ENCODE measurements at regions of chr20 and their contacts with region 1.

Region 1: DNA sequence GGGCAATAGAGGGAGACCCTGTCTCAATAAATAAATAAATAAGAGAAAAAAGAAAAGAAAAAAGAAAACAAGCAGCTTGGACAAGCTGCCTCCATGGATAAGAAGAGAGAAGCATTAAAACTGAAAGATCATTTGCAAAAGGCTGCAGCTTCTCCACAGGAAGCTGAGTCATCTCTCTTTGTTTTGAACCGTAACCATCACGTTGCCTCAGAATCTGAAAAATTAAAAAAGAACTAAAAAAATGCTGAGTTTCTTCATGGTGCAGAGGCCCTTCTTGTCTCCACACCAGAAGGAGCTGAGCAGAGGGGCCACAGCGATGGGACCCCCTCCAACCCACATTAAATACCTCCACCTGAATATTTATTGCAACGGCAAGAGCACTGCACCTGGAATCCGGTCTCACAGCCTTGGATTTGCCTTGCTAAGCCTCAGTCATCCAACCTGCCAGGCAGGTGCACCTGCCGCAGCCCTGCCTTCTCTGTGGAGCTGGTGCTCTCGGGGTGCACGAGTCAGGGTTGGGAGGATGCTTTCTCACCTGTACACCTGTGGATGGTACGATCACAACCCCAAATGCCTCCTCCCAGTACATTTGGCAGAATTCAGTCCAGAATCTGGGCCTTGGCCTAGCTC is 28.1 kb downstream of the TOX2 start:
- DNase-seq: peak in 7 of 9 donors; percentile 28 to 56 (median 47)
- ATAC-seq: peak; percentile 72
- H3K4me3 ChIP-seq: no peak overlapping the region
- H3K4me3 Mint-ChIP-seq: peak overlapping the region; percentile 16 to 79 (median 46)
- H3K27ac ChIP-seq: peak overlapping the region; percentile 9
- H3K27ac Mint-ChIP-seq: peak overlapping the region; percentile 42 to 90 (median 72)
- H3K4me1 ChIP-seq: peaks cover 29% of the 10 kb centered on the region in 2 donors
- H3K4me1 Mint-ChIP-seq: peaks cover 61 to 92% (median 68%) of the 10 kb centered on the region in 7 donors
- H3K27me3 ChIP-seq: no peaks in the 10 kb centered on the region
- H3K27me3 Mint-ChIP-seq: peaks cover 0 to 27% (median 0%) of the 10 kb centered on the region in 5 donors

Region 2: DNA sequence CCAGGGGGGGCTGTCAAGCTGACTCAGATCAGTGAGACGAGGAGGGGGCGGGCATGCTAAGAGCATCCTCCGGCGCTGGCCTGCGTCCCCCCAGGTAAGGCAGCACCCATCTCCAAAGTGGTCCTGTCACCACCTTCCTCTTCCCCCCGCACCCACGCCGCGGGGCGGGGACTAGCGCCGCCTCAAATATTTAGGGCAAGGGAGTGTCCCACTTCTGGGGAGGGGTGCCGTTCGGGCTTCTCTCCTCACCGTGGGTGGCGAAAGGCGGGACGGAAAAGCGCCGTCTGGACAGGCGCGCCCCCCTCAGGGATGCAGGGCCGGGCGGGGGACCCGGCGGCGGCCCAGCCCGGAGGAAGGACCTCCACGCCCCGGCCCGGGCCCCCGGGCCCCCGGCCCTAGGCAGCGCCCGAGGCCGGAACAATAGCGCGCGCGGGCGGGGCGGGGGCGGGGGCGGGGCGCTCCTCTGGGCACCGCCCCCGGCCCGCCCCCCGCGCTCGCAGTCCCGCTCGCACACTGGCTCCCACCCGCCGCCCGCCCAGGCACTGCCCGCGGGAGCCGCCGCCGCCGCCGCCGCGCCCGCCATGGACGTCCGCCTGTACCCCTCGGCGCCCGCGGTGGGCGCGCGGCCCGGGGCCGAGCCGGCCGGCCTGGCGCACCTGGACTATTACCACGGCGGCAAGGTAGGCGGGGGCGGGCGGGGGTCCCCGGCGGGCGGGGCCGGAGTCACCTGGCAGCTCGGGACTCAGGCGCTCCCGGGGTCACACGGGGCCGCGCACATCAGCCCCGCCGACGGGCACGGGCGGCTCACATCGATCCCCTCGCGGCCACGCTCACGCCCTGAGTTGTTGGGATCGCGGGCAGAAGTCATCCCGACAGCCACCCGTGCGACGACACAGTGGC is 28.2 kb before region 1 on chr20 and contains the start of gene TOX2:
- CTCF ChIA-PET with region 1: no interaction called
- POLR2A ChIA-PET with region 1: interaction called, 3 read pairs
- intact Hi-C with region 1: loop called in 1 of 2 experiments (anchors 2 kb)
- DNase-seq: peak; percentile 12 to 59 (median 42)
- ATAC-seq: peak; percentile 86
- H3K4me3 ChIP-seq: peak within 1 kb of the TSS; percentile 57
- H3K4me3 Mint-ChIP-seq: peak within 1 kb of the TSS; percentile 78 to 97 (median 88)
- H3K27ac ChIP-seq: no peak within 1 kb of the TSS
- H3K27ac Mint-ChIP-seq: peak within 1 kb of the TSS in 8 of 9 donors; percentile 70 to 94 (median 78)
- H3K4me1 ChIP-seq: peaks cover 14 to 16% of the 10 kb centered on the region in 2 donors
- H3K4me1 Mint-ChIP-seq: peaks cover 12 to 28% (median 21%) of the 10 kb centered on the region in 7 donors
- H3K27me3 ChIP-seq: peaks cover 0 to 6% of the 10 kb centered on the region in 2 donors
- H3K27me3 Mint-ChIP-seq: peaks cover 26 to 62% (median 34%) of the 10 kb centered on the region in 5 donors
- total RNA-seq, gene TOX2: 0.22 to 7.1 (median 0.96) TPM

Region 3: GRCh38 chr20:43955062-43955749 is 12.4 kb after region 1 on chr20:
- CTCF ChIA-PET with region 1: interaction called, 4 read pairs
- POLR2A ChIA-PET with region 1: interaction called, 14 read pairs
- intact Hi-C with region 1: loop called (anchors 1 kb)
- DNase-seq: peak in 3 of 9 donors; percentile 13 to 49 (median 13)
- ATAC-seq: peak; percentile 72
- H3K4me3 ChIP-seq: no peak overlapping the region
- H3K4me3 Mint-ChIP-seq: peak overlapping the region in 7 of 10 donors; percentile 8 to 65 (median 22)
- H3K27ac ChIP-seq: no peak overlapping the region
- H3K27ac Mint-ChIP-seq: peak overlapping the region in 2 of 9 donors; percentile 28 to 58
- H3K4me1 ChIP-seq: peaks cover 72 to 76% of the 10 kb centered on the region in 2 donors
- H3K4me1 Mint-ChIP-seq: peaks cover 72 to 96% (median 85%) of the 10 kb centered on the region in 7 donors
- H3K27me3 ChIP-seq: peaks cover 0 to 5% of the 10 kb centered on the region in 2 donors
- H3K27me3 Mint-ChIP-seq: peaks cover 0 to 45% (median 0%) of the 10 kb centered on the region in 5 donors

Region 4: GRCh38 chr20:43963872-43964791 is 21.4 kb after region 1 on chr20:
- CTCF ChIA-PET with region 1: interaction called, 4 read pairs
- POLR2A ChIA-PET with region 1: interaction called, 14 read pairs
- intact Hi-C with region 1: loop called in 1 of 2 experiments (anchors 1 kb)
- DNase-seq: peak in 7 of 9 donors; percentile 71 to 86 (median 83)
- ATAC-seq: peak; percentile 94
- H3K4me3 ChIP-seq: no peak overlapping the region
- H3K4me3 Mint-ChIP-seq: peak overlapping the region; percentile 47 to 80 (median 72)
- H3K27ac ChIP-seq: peak overlapping the region; percentile 18
- H3K27ac Mint-ChIP-seq: peak overlapping the region in 4 of 9 donors; percentile 16 to 90 (median 59)
- H3K4me1 ChIP-seq: peaks cover 43 to 65% of the 10 kb centered on the region in 2 donors
- H3K4me1 Mint-ChIP-seq: peaks cover 25 to 52% (median 43%) of the 10 kb centered on the region in 7 donors
- H3K27me3 ChIP-seq: no peaks in the 10 kb centered on the region
- H3K27me3 Mint-ChIP-seq: peaks cover 0 to 18% (median 0%) of the 10 kb centered on the region in 5 donors

Region 5: GRCh38 chr20:44018259-44018941 is 75.6 kb after region 1 on chr20:
- CTCF ChIA-PET with region 1: interaction called, 4 read pairs
- POLR2A ChIA-PET with region 1: no interaction called
- intact Hi-C with region 1: loop called in 1 of 2 experiments (anchors 5 kb)
- DNase-seq: no peak
- ATAC-seq: no peak
- H3K4me3 ChIP-seq: no peak overlapping the region
- H3K4me3 Mint-ChIP-seq: peak overlapping the region in 3 of 10 donors; percentile 5 to 83 (median 70)
- H3K27ac ChIP-seq: no peak overlapping the region
- H3K27ac Mint-ChIP-seq: peak overlapping the region in 1 of 9 donors; percentile 17
- H3K4me1 ChIP-seq: peaks cover 26 to 33% of the 10 kb centered on the region in 2 donors
- H3K4me1 Mint-ChIP-seq: peaks cover 21 to 56% (median 43%) of the 10 kb centered on the region in 7 donors
- H3K27me3 ChIP-seq: no peaks in the 10 kb centered on the region
- H3K27me3 Mint-ChIP-seq: peaks cover 0 to 69% (median 5%) of the 10 kb centered on the region in 5 donors

Region 6: GRCh38 chr20:44832724-44833123 is 889.9 kb after region 1 on chr20:
- CTCF ChIA-PET with region 1: no interaction called
- POLR2A ChIA-PET with region 1: no interaction called
- intact Hi-C with region 1: no loop called
- DNase-seq: no peak
- ATAC-seq: no peak
- H3K4me3 ChIP-seq: no peak overlapping the region
- H3K4me3 Mint-ChIP-seq: no peak overlapping the region
- H3K27ac ChIP-seq: no peak overlapping the region
- H3K27ac Mint-ChIP-seq: no peak overlapping the region
- H3K4me1 ChIP-seq: no peaks in the 10 kb centered on the region
- H3K4me1 Mint-ChIP-seq: no peaks in the 10 kb centered on the region
- H3K27me3 ChIP-seq: no peaks in the 10 kb centered on the region
- H3K27me3 Mint-ChIP-seq: peaks cover 23 to 45% (median 25%) of the 10 kb centered on the region in 5 donors

Measured in naive thymus-derived CD4-positive, alpha-beta T cell (primary cell).